ENCODE measurements at regions of chr17 and their contacts with region 1.

Region 1: DNA sequence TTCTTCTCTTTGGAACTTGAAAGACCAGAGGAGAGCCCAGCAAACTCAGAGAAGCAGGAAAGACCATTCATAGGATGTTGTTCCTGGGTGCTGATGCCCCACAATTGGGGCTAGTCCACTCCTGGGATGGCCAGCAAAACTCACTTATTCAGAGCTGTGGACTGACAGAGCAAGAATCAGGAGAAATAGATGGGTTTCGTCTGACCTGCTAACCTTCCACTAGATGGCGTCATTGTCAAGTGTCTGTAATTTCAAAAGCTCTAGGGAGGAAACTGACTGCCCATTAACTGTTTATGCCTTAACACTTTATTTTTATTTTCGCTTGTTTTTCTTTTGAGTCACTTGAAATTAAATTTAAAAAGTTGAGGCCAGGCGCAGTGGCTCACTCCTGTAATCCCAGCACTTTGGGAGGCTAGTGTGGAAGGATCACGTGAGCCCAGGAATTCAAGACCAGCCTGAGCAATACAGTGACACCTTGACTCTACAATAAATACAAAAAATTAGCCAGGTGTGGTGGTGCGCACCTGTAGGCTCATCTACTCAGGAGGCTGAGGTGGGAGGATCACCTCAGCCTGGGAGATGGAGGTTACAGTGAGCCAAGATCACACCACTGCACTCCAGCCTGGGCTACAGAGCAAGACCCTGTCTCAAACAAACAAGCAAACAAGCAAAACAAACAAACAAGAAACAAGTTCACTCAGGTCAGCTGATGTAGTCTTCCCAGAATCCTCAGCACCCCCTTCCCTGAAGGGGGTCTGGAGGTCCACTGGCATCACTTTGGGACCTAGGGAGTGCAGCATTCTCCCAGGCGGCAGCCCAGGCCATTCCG is 28.6 kb upstream of the MILR1 start:
- DNase-seq: peak in 4 of 5 donors; percentile 3 to 71 (median 64)
- H3K4me3 ChIP-seq: no peak overlapping the region
- H3K4me3 Mint-ChIP-seq: no peak overlapping the region
- H3K27ac ChIP-seq: no peak overlapping the region
- H3K27ac Mint-ChIP-seq: no peak overlapping the region
- H3K4me1 ChIP-seq: no peaks in the 10 kb centered on the region
- H3K4me1 Mint-ChIP-seq: peaks cover 3 to 7% (median 5%) of the 10 kb centered on the region in 3 donors
- H3K27me3 ChIP-seq: no peaks in the 10 kb centered on the region
- H3K27me3 Mint-ChIP-seq: no peaks in the 10 kb centered on the region

Region 2: GRCh38 chr17:64315032-64315490 is 105.3 kb before region 1 on chr17:
- CTCF ChIA-PET with region 1: interaction called, 76 read pairs
- POLR2A ChIA-PET with region 1: no interaction called
- DNase-seq: no peak
- H3K4me3 ChIP-seq: no peak overlapping the region
- H3K4me3 Mint-ChIP-seq: no peak overlapping the region
- H3K27ac ChIP-seq: no peak overlapping the region
- H3K27ac Mint-ChIP-seq: peak overlapping the region in 1 of 8 donors; percentile 43
- H3K4me1 ChIP-seq: no peaks in the 10 kb centered on the region
- H3K4me1 Mint-ChIP-seq: peaks cover 0 to 6% (median 1%) of the 10 kb centered on the region in 3 donors
- H3K27me3 ChIP-seq: no peaks in the 10 kb centered on the region
- H3K27me3 Mint-ChIP-seq: peaks cover 0 to 8% of the 10 kb centered on the region in 2 donors

Region 3: DNA sequence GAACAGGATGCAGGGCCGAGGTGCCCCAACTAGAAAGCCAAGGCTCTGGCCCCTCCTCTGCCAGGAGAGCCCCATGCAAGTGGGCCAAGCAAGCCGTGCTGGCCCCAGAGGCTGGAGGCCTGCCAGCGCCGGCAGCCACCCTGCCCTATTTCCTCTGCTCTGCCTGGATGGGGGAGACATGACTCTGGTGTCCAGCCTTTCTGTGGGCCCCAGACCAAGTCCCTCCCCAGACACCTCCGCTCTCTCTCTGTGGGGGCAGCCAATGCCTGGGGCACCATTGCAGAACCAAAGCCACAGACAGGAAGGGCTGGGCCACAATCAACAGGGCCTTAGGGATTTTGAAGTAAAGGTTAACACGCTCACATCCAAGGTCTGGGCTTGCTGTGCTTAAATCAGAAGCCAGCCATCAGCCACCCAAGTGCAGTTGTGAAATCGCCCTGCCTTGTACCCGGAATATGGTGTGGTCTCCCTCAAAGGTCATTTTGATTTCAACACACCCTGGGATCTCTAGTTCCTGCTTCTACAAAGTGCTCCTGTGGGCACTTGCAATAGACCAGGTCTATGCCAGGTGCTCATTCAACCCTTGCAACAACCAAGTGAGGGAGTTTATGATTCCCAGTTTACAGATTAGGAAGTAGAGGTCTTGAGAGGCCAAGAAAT is 93.8 kb before region 1 on chr17:
- CTCF ChIA-PET with region 1: interaction called, 76 read pairs
- POLR2A ChIA-PET with region 1: no interaction called
- DNase-seq: no peak
- H3K4me3 ChIP-seq: no peak overlapping the region
- H3K4me3 Mint-ChIP-seq: peak overlapping the region in 1 of 7 donors; percentile 44
- H3K27ac ChIP-seq: no peak overlapping the region
- H3K27ac Mint-ChIP-seq: peak overlapping the region in 7 of 8 donors; percentile 13 to 81 (median 61)
- H3K4me1 ChIP-seq: peaks cover 5% of the 10 kb centered on the region
- H3K4me1 Mint-ChIP-seq: peaks cover 22 to 37% (median 32%) of the 10 kb centered on the region in 3 donors
- H3K27me3 ChIP-seq: no peaks in the 10 kb centered on the region
- H3K27me3 Mint-ChIP-seq: peaks cover 0 to 1% of the 10 kb centered on the region in 2 donors

Region 4: DNA sequence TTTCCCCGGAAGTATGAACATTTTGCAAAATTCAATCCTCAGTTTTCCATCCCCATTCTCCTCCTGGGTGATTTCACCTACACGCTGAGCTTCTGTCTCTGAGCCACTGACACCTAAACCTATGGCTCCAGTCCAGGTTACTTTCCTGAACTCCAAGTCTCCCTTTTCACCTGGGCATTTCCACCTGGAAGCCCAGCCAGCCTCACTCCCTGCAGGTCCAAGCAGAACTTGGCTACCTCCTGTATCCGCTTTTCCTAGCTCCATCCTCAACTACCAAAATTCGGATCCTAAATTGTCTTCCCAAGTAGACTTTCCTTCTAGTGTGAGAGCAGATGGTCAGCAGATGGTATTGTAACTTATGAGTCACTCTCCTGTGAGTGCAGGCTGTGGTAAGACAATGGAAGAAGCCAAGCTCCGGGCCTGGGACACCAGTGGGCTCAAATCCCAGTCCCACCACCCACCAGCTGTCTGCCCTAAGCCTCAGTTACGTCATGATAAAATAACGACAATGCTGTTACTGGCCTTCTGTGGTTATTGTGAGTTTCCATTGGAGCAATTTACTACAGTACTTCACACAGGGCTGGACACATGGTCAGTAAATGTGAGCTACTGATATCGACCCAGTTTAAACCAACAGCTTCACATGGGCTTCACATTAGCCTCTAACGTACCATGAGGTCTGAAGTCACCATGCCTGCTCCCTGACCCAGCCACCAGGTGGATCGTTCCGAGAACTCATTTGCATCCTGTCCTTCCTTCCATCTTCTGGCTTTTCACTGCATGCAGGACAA is 63.0 kb before region 1 on chr17:
- CTCF ChIA-PET with region 1: interaction called, 13 read pairs
- POLR2A ChIA-PET with region 1: no interaction called
- DNase-seq: no peak
- H3K4me3 ChIP-seq: no peak overlapping the region
- H3K4me3 Mint-ChIP-seq: no peak overlapping the region
- H3K27ac ChIP-seq: no peak overlapping the region
- H3K27ac Mint-ChIP-seq: peak overlapping the region in 4 of 8 donors; percentile 23 to 58 (median 56)
- H3K4me1 ChIP-seq: no peaks in the 10 kb centered on the region
- H3K4me1 Mint-ChIP-seq: peaks cover 0 to 10% (median 0%) of the 10 kb centered on the region in 3 donors
- H3K27me3 ChIP-seq: no peaks in the 10 kb centered on the region
- H3K27me3 Mint-ChIP-seq: no peaks in the 10 kb centered on the region

Region 5: GRCh38 chr17:64393000-64393402 is 27.4 kb before region 1 on chr17:
- CTCF ChIA-PET with region 1: interaction called, 42 read pairs
- POLR2A ChIA-PET with region 1: interaction called, 6 read pairs
- DNase-seq: peak; percentile 12 to 74 (median 59)
- H3K4me3 ChIP-seq: peak overlapping the region; percentile 47
- H3K4me3 Mint-ChIP-seq: peak overlapping the region; percentile 77 to 92 (median 86)
- H3K27ac ChIP-seq: peak overlapping the region; percentile 51
- H3K27ac Mint-ChIP-seq: peak overlapping the region; percentile 84 to 98 (median 96)
- H3K4me1 ChIP-seq: peaks cover 70% of the 10 kb centered on the region
- H3K4me1 Mint-ChIP-seq: peaks cover 57 to 70% (median 57%) of the 10 kb centered on the region in 3 donors
- H3K27me3 ChIP-seq: no peaks in the 10 kb centered on the region
- H3K27me3 Mint-ChIP-seq: no peaks in the 10 kb centered on the region

Region 6: GRCh38 chr17:64441772-64442540 is 21.6 kb after region 1 on chr17:
- CTCF ChIA-PET with region 1: no interaction called
- POLR2A ChIA-PET with region 1: no interaction called
- DNase-seq: peak in 2 of 5 donors; percentile 7 to 35
- H3K4me3 ChIP-seq: peak overlapping the region; percentile 4
- H3K4me3 Mint-ChIP-seq: peak overlapping the region in 6 of 7 donors; percentile 65 to 82 (median 68)
- H3K27ac ChIP-seq: no peak overlapping the region
- H3K27ac Mint-ChIP-seq: peak overlapping the region in 7 of 8 donors; percentile 42 to 92 (median 76)
- H3K4me1 ChIP-seq: peaks cover 22% of the 10 kb centered on the region
- H3K4me1 Mint-ChIP-seq: peaks cover 12 to 18% (median 14%) of the 10 kb centered on the region in 3 donors
- H3K27me3 ChIP-seq: no peaks in the 10 kb centered on the region
- H3K27me3 Mint-ChIP-seq: peaks cover 3% of the 10 kb centered on the region in 2 donors

Region 7: DNA sequence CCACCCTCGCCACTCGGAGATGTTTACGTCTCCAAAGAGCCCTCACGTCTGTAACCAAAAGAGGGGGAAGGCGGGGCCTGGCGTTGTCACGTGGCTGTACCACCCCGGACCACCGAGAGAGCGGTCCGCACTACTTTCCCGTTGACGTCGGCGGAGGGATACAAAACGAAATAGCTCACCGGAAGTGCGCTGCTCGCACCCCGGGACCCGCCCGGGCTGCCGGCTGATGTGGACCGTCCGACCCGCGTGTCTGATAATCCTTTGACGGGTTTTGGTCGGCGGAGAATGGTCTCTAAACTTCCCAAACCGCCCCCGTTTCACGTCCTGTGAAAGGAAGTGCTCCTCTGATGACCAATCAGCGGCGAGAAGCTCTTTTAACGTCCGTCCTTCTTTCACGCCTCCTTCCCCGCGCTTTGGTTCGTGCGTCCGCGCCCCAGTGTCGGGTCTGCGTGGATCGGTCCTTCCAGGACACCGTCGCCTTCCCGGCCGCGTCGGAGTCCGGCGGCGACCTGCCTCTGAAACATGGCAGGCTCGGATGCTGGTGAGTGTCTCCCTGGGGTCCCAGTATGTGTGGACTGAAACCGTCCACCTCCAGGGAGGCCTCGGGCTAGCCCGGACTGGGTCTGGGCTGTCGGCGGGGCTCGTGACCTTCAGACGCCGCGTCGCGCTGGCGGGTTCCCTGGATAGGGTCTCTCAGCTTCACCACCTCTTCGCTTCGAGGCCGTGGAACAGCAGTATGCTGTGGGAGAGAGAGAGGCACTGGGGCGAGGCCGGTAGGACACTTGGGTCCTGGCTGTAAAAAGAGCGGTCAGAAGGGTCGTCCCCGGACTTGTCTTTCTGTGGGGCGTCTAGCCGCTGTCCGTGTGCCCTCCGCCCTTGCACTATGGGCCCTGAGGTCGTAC is 86.5 kb after region 1 on chr17 and contains the start of gene CEP95:
- CTCF ChIA-PET with region 1: interaction called, 42 read pairs
- POLR2A ChIA-PET with region 1: interaction called, 9 read pairs
- DNase-seq: peak; percentile 93 to 99 (median 97)
- H3K4me3 ChIP-seq: peak within 1 kb of the TSS; percentile 91
- H3K4me3 Mint-ChIP-seq: peak within 1 kb of the TSS; percentile 96 to 100 (median 99)
- H3K27ac ChIP-seq: peak within 1 kb of the TSS; percentile 98
- H3K27ac Mint-ChIP-seq: peak within 1 kb of the TSS; percentile 99 to 100 (median 99)
- H3K4me1 ChIP-seq: peaks cover 48% of the 10 kb centered on the region
- H3K4me1 Mint-ChIP-seq: peaks cover 52 to 77% (median 70%) of the 10 kb centered on the region in 3 donors
- H3K27me3 ChIP-seq: no peaks in the 10 kb centered on the region
- H3K27me3 Mint-ChIP-seq: peaks cover 0 to 24% of the 10 kb centered on the region in 2 donors
- total RNA-seq, gene CEP95: 39.3 to 43.5 TPM

Region 8: GRCh38 chr17:64582879-64583632 is 162.7 kb after region 1 on chr17:
- CTCF ChIA-PET with region 1: no interaction called
- POLR2A ChIA-PET with region 1: no interaction called
- DNase-seq: no peak
- H3K4me3 ChIP-seq: no peak overlapping the region
- H3K4me3 Mint-ChIP-seq: no peak overlapping the region
- H3K27ac ChIP-seq: no peak overlapping the region
- H3K27ac Mint-ChIP-seq: peak overlapping the region in 2 of 8 donors; percentile 47 to 69
- H3K4me1 ChIP-seq: no peaks in the 10 kb centered on the region
- H3K4me1 Mint-ChIP-seq: peaks cover 7 to 12% (median 11%) of the 10 kb centered on the region in 3 donors
- H3K27me3 ChIP-seq: no peaks in the 10 kb centered on the region
- H3K27me3 Mint-ChIP-seq: no peaks in the 10 kb centered on the region

Region 9: GRCh38 chr17:64615028-64615677 is 194.8 kb after region 1 on chr17:
- CTCF ChIA-PET with region 1: no interaction called
- POLR2A ChIA-PET with region 1: no interaction called
- DNase-seq: no peak
- H3K4me3 ChIP-seq: no peak overlapping the region
- H3K4me3 Mint-ChIP-seq: no peak overlapping the region
- H3K27ac ChIP-seq: no peak overlapping the region
- H3K27ac Mint-ChIP-seq: no peak overlapping the region
- H3K4me1 ChIP-seq: peaks cover 18% of the 10 kb centered on the region
- H3K4me1 Mint-ChIP-seq: peaks cover 31 to 51% (median 51%) of the 10 kb centered on the region in 3 donors
- H3K27me3 ChIP-seq: no peaks in the 10 kb centered on the region
- H3K27me3 Mint-ChIP-seq: no peaks in the 10 kb centered on the region

Region 10: DNA sequence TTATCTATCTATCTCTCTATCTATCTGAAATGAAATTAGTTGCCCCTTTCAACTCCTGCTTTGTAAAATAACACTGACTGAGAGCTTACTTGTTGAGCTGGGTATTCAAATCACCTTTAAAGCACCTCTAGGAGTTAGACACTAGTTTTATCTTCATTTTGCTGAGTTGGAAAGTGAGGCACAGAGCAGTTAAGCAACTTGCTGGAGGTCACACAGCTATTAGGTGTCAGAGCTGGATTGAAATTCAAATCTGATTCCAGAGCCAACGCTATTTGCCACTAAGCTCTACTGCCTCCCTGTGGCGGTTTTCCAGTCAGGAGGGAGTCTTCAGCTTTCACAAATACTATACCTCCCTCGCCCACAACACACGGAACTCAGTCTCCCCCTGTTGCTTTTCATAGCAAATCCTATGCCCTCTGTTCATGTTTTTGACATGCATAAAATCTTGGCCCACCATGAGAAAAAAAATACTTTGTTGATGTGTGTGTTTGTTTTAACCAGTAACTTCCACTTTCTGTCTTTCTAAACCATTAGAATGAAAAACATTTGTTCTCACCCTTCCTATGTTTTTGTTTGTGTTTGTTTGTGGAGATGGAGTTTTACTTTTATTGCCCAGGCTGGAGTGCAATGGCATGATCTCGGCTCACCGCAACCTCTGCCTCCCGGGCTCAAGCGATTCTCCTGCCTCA is 316.6 kb after region 1 on chr17:
- CTCF ChIA-PET with region 1: interaction called, 29 read pairs
- POLR2A ChIA-PET with region 1: no interaction called
- DNase-seq: peak; percentile 10 to 70 (median 38)
- H3K4me3 ChIP-seq: no peak overlapping the region
- H3K4me3 Mint-ChIP-seq: no peak overlapping the region
- H3K27ac ChIP-seq: no peak overlapping the region
- H3K27ac Mint-ChIP-seq: peak overlapping the region in 1 of 8 donors; percentile 48
- H3K4me1 ChIP-seq: peaks cover 12% of the 10 kb centered on the region
- H3K4me1 Mint-ChIP-seq: peaks cover 5 to 10% (median 7%) of the 10 kb centered on the region in 3 donors
- H3K27me3 ChIP-seq: no peaks in the 10 kb centered on the region
- H3K27me3 Mint-ChIP-seq: no peaks in the 10 kb centered on the region